ENCODE measurements at regions of chr16 and their contacts with region 1.

Region 1: DNA sequence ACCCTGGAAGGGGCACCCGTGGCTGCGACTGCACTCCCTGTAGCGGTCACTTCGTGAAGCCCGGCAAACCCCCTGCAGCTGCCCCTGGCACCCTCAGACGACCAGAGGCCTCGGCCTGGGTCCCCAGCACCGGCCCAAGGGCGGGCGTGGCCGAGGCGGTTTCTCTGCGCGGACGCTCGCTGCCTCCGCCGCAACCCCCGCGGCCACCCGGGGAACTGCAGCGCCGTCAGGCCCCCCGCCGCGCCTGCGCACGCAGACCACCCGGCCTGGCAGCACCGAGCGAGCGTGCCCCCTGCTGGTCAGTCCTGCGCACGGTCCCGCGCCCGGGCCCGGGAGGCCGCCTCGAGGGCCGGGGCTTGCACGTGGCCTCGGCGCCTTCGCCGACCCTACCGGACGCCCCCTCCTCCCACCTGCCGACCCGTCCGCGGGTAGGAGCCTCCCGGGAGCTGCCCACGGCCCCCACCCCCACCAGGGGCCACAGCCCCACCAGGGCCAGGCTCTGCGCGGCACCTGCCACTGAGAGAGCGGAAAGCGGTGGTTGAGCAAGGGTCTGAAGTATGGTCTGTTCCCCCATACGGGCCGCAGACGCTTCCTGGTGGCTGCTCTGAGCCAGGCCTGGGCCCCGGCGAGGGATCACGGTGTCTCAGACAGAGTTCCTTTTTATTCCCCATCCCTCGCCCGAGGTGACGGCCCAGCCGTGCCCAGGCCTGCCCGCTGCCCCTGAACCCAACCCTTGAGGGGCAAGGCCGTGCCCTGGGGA is 11.5 kb upstream of the HS3ST6 start:
- DNase-seq: peak; percentile 82 to 92 (median 90)
- H3K4me3 ChIP-seq: peak overlapping the region in 1 of 2 donors; percentile 28
- H3K4me3 Mint-ChIP-seq: peak overlapping the region in 4 of 8 donors; percentile 39 to 68 (median 52)
- H3K27ac ChIP-seq: peak overlapping the region; percentile 13
- H3K27ac Mint-ChIP-seq: no peak overlapping the region
- H3K4me1 ChIP-seq: peaks cover 6% of the 10 kb centered on the region
- H3K4me1 Mint-ChIP-seq: peaks cover 2 to 4% (median 4%) of the 10 kb centered on the region in 4 donors
- H3K27me3 ChIP-seq: no peaks in the 10 kb centered on the region
- H3K27me3 Mint-ChIP-seq: no peaks in the 10 kb centered on the region

Region 2: GRCh38 chr16:1863681-1864460 is 65.9 kb before region 1 on chr16:
- CTCF ChIA-PET with region 1: interaction called, 5 read pairs
- POLR2A ChIA-PET with region 1: no interaction called
- intact Hi-C with region 1: loop called (anchors 1 kb)
- DNase-seq: peak in 4 of 5 donors; percentile 28 to 41 (median 34)
- H3K4me3 ChIP-seq: no peak overlapping the region
- H3K4me3 Mint-ChIP-seq: no peak overlapping the region
- H3K27ac ChIP-seq: no peak overlapping the region
- H3K27ac Mint-ChIP-seq: peak overlapping the region in 1 of 7 donors; percentile 47
- H3K4me1 ChIP-seq: no peaks in the 10 kb centered on the region
- H3K4me1 Mint-ChIP-seq: no peaks in the 10 kb centered on the region
- H3K27me3 ChIP-seq: no peaks in the 10 kb centered on the region
- H3K27me3 Mint-ChIP-seq: peaks cover 9 to 27% of the 10 kb centered on the region in 2 donors

Region 3: DNA sequence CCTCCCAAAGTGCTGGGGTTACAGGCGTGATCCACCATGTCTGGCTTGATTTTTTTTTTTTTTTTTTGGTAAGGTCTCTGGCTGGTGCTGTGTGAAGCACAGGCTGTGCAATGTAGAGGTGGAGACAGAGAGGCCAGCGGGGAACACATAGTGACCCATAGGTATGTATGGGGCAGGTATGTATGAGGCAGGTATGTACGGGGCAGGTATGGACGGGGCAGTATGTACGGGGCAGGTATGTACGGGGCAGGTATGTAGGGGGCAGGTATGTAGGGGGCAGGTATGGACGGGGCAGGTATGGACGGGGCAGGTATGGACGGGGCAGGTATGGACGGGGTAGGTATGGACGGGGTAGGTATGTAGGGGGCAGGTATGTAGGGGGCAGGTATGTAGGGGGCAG is 19.7 kb after region 1 on chr16:
- CTCF ChIA-PET with region 1: no interaction called
- POLR2A ChIA-PET with region 1: no interaction called
- intact Hi-C with region 1: no loop called
- DNase-seq: no peak
- H3K4me3 ChIP-seq: no peak overlapping the region
- H3K4me3 Mint-ChIP-seq: no peak overlapping the region
- H3K27ac ChIP-seq: no peak overlapping the region
- H3K27ac Mint-ChIP-seq: no peak overlapping the region
- H3K4me1 ChIP-seq: no peaks in the 10 kb centered on the region
- H3K4me1 Mint-ChIP-seq: peaks cover 0 to 2% (median 0%) of the 10 kb centered on the region in 4 donors
- H3K27me3 ChIP-seq: no peaks in the 10 kb centered on the region
- H3K27me3 Mint-ChIP-seq: no peaks in the 10 kb centered on the region

Region 4: DNA sequence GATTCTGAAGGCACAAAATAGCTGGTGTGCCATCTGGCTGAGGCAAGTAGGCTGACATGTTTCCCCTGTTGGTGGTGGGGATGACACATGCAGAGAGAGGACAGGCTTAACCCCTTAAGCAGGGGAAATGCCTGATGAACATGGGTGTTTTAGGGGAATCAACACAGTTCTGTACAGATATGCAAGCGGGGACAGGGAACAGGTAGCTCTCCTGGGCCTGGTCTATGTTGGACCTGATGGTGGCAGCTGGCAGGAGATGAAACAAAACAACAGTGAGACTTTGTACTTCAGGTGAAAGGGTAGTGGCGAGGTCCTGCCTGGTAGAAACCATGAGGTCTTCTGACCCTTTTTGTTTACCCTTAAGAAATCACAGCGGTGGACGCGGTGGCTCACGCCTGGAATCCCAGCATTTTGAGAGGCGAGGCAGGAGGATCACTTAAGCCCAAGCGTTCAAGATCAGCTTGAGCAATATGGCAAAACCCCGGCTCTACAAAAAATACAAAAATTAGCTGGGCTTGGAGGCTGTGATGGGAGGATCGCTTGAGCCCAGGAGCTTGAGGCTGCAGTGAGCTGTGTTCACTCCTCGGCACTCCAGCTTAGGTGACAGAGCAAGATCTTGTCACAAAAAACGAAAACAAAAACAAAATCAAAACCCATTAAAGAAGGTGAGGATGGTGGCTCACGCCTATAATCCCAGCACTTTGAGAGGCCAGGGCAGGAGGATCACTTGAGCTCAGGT is 1268.7 kb after region 1 on chr16:
- CTCF ChIA-PET with region 1: no interaction called
- POLR2A ChIA-PET with region 1: no interaction called
- intact Hi-C with region 1: no loop called
- DNase-seq: no peak
- H3K4me3 ChIP-seq: no peak overlapping the region
- H3K4me3 Mint-ChIP-seq: no peak overlapping the region
- H3K27ac ChIP-seq: no peak overlapping the region
- H3K27ac Mint-ChIP-seq: peak overlapping the region in 1 of 7 donors; percentile 18
- H3K4me1 ChIP-seq: no peaks in the 10 kb centered on the region
- H3K4me1 Mint-ChIP-seq: peaks cover 0 to 9% (median 2%) of the 10 kb centered on the region in 4 donors
- H3K27me3 ChIP-seq: peaks cover 18% of the 10 kb centered on the region
- H3K27me3 Mint-ChIP-seq: peaks cover 18 to 25% of the 10 kb centered on the region in 2 donors